ENCODE measurements at regions of chr18 and their contacts with region 1.

Region 1: GRCh38 chr18:2410688-2411087 is 160.6 kb downstream of the METTL4 start:
- DNase-seq: no peak
- ATAC-seq: no peak
- H3K4me3 ChIP-seq: no peak overlapping the region
- H3K27ac ChIP-seq: no peak overlapping the region
- H3K4me1 ChIP-seq: no peaks in the 10 kb centered on the region
- H3K27me3 ChIP-seq: peaks cover 0 to 5% (median 0%) of the 10 kb centered on the region in 7 donors
- CTCF ChIP-seq: no peak

Region 2: DNA sequence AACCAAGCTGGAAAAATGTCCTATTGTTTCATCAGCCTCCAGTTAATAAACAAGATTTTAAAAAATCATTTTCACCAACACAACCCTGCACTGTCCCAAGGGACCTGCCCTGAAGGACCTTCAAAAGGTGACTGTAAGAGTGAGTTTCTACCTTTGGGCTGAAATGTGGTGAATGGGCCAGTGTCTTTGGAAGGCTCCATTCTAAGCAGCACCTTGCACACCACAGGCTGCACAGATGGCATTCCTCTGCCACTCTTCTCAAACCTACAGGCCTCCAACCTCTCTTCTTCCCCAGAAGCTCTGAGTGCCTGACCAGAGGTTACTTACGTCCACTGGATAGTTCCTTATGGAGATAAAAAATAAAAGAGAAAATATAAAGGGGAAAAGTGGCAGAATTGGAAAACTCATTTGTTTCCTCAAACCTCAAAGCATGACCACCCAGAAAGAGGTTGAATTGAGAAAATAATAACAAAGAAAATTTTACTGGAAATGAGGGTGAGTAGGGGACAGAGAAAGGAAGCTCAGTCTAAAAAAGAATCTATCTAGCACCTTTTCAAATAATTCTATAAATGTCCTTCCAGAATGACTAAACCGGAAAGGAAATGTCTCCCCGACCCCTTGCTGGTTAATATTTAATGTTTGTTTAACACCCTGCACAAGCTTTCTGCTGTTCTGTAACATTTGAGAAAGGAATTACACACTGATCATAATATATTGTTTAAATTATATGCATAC is 15.1 kb before region 1 on chr18:
- intact Hi-C with region 1: loop called in 1 of 10 experiments (anchors 1 kb)
- DNase-seq: no peak
- ATAC-seq: no peak
- H3K4me3 ChIP-seq: no peak overlapping the region
- H3K27ac ChIP-seq: no peak overlapping the region
- H3K4me1 ChIP-seq: no peaks in the 10 kb centered on the region
- H3K27me3 ChIP-seq: no peaks in the 10 kb centered on the region
- CTCF ChIP-seq: no peak

Region 3: DNA sequence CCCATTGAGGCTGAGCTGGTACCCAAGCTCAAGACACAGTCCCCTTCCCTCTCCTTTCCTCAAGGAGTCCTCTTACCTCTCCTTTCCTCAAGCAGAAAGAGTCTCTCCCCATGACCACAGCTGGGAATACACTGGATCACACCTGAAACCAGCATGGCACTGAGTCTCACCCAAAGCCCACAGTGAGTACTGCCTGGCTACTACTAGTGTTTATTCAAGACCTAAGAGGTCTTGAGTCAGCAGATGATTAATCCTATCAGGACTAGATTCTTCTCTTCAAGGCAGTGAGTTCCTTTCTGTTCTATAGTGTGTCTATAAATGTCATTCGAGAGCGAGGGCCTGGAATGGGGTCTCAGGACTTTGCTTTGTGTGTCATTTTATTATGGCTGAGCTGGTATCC is 49.2 kb after region 1 on chr18:
- intact Hi-C with region 1: loop called in 1 of 10 experiments (anchors 10 kb)
- DNase-seq: no peak
- ATAC-seq: no peak
- H3K4me3 ChIP-seq: no peak overlapping the region
- H3K27ac ChIP-seq: no peak overlapping the region
- H3K4me1 ChIP-seq: no peaks in the 10 kb centered on the region
- H3K27me3 ChIP-seq: no peaks in the 10 kb centered on the region
- CTCF ChIP-seq: no peak

Measured in heart right ventricle (tissue), 16 donors.